Heart right ventricle (tissue), 16 donors: ENCODE measurements at regions of chr10 and their contacts with region 1.

Region 1: DNA sequence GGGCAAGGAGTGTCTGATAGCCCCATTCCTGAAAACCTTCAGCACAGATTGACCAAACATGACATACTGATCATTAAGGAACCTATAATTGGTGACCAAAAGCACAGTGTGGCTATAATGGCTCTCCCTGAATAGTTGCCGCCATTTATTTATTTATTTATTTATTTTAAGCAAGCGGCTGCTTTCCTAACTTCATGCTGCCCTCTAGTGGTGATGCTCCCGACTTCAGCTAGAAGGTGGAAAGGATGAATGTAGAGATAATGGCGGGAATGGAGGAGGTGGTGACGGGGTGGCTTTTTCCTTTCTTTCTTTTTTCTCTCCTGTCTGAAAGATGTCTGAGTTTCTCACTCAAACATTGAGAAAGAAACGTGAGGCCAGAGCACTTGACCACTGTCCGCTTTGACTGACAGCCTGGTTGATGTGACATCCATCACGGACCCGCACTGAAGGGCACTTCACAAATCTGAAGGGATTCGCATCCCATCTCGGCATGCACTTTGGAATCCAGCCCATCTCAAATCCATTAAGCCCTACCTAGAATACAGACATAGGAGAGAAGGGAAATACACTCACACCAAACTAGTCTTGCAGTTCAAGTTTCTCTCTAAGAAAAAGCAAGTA is 1090.1 kb downstream of the KCNMA1 start:
- DNase-seq: peak; percentile 56 to 89
- ATAC-seq: peak; percentile 56 to 78 (median 72)
- H3K4me3 ChIP-seq: peak overlapping the region in 1 of 10 donors; percentile 12
- H3K27ac ChIP-seq: no peak overlapping the region
- H3K4me1 ChIP-seq: peaks cover 0 to 15% (median 0%) of the 10 kb centered on the region in 9 donors
- H3K27me3 ChIP-seq: no peaks in the 10 kb centered on the region
- CTCF ChIP-seq: peak; percentile 72 to 91 (median 83)

Region 2: DNA sequence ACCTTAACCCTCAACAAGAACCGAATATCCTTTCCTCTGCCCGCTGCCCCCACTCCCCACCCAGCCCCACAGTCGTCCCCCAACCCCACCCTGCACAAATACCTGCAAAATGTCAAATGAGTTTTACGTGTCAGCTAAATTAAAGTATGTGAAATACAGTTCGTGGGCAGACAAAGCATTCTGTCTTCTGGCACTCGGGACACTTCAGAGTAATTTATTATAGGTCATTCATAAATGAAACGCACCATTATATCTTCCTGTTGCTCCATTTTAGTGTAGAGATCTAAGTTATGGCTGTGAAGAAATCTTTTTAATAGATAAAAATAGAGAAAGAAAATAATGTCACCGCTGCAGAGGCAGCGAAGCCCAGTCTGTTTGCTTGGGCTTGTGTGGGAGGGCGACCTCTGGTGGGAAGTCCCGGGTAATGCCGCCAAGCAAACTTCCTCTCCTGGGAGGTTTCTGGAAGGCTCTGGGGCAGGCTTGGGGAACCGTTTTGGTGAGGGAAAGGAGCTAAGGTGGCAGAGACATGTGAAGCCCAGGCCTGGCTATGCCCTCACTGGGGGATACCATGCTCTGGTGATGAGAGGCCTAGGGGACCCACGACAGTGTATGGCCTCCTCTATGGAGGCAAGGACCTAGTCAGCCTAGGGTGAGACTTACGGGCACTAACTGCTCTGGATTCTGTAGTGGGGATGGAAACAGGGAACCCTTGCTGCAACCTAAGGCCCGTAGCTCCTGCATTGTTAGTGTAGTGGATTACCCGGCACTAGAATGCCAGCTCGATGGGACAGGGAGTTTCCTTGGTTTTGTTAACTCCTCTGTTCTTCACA is 511.1 kb before region 1 on chr10:
- intact Hi-C with region 1: loop called in 7 of 10 experiments (anchors 5 to 10 kb)
- DNase-seq: peak; percentile 73 to 81
- ATAC-seq: peak; percentile 78 to 95 (median 88)
- H3K4me3 ChIP-seq: peak overlapping the region in 6 of 10 donors; percentile 19 to 38 (median 25)
- H3K27ac ChIP-seq: no peak overlapping the region
- H3K4me1 ChIP-seq: peaks cover 0 to 25% (median 9%) of the 10 kb centered on the region in 9 donors
- H3K27me3 ChIP-seq: no peaks in the 10 kb centered on the region
- CTCF ChIP-seq: peak; percentile 88 to 98 (median 95)

Region 3: GRCh38 chr10:76139431-76139830 is 408.0 kb before region 1 on chr10:
- intact Hi-C with region 1: no loop called
- DNase-seq: no peak
- ATAC-seq: no peak
- H3K4me3 ChIP-seq: no peak overlapping the region
- H3K27ac ChIP-seq: no peak overlapping the region
- H3K4me1 ChIP-seq: peaks cover 0 to 14% (median 0%) of the 10 kb centered on the region in 9 donors
- H3K27me3 ChIP-seq: no peaks in the 10 kb centered on the region
- CTCF ChIP-seq: no peak

Region 4: DNA sequence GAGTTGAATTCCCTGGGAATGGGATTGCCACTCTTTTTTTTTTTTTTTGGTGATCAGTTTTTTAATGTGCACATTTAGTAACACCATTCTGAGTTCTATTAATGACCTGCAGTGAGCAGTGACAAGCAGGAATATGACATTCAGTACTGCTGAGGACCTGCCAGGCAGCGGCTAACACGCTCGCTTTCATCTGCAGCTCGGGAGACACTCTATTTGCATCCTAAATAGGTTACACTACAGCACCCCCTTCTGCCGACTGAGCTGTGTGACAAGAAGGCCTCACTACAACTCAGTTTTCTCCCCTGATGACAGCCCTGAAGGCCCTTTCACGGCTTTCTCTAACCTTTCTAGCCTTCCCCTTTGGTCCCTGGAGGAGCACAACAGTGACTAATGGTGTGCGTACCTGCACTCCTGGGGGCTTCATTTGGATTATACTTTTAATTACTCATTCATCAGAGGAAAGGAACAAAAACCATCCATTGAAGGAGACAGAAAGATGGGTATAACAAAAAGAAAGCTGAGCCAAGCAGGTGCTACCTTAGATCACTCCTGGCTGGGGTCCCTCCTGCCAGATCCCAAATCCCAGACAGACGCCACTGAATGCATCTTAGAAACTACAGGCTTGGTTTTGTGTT is 243.7 kb before region 1 on chr10:
- intact Hi-C with region 1: loop called in 4 of 10 experiments (anchors 10 kb)
- DNase-seq: peak; percentile 59 to 78
- ATAC-seq: peak; percentile 90 to 97 (median 94)
- H3K4me3 ChIP-seq: no peak overlapping the region
- H3K27ac ChIP-seq: no peak overlapping the region
- H3K4me1 ChIP-seq: peaks cover 0 to 34% (median 15%) of the 10 kb centered on the region in 9 donors
- H3K27me3 ChIP-seq: no peaks in the 10 kb centered on the region
- CTCF ChIP-seq: peak; percentile 20 to 72 (median 58)

Region 5: GRCh38 chr10:76324283-76324682 is 223.2 kb before region 1 on chr10:
- intact Hi-C with region 1: loop called in 1 of 10 experiments (anchors 10 kb)
- DNase-seq: peak in 1 of 2 donors; percentile 44
- ATAC-seq: peak in 7 of 8 donors; percentile 47 to 94 (median 79)
- H3K4me3 ChIP-seq: no peak overlapping the region
- H3K27ac ChIP-seq: no peak overlapping the region
- H3K4me1 ChIP-seq: peaks cover 0 to 9% (median 0%) of the 10 kb centered on the region in 9 donors
- H3K27me3 ChIP-seq: no peaks in the 10 kb centered on the region
- CTCF ChIP-seq: no peak

Region 6: DNA sequence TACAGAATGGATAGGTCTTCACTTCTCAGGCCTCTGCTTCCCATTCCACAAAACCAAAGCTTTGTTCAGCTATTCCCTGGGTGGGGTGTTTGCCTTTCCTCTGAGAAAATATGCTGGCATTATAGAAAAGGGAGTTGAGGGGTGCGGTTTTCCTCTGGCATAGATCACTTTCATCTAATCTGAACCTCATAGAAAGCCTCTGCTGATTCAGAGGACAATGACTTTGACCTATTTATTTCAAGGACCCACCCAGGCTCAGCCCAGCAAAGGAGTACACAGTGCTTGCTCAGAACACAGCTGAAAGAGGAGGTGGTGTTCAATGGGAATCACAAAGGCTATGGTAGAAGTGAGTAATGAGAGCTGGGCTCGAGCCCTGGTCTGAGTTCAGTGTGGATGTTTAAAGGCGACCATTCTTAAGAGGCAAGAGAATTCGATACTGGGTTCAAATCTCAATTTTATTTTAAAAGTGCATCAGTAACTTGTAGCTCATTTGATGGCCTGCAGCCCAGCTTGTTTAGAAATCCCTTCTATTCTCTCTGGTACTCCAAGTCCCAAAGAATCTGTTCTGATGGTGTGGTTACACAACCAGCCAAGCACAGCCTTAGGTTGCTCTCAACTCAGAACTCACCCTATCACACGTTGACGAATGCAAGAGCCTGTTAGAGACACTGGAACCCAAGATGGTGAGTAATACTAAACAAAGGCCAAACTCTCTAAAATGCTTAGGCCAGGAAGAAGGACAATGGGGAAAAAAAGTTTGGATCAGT is 103.2 kb before region 1 on chr10:
- intact Hi-C with region 1: loop called in 1 of 10 experiments (anchors 5 kb)
- DNase-seq: no peak
- ATAC-seq: peak in 7 of 8 donors; percentile 56 to 94 (median 79)
- H3K4me3 ChIP-seq: no peak overlapping the region
- H3K27ac ChIP-seq: peak overlapping the region in 6 of 10 donors; percentile 12 to 73 (median 33)
- H3K4me1 ChIP-seq: peaks cover 0 to 27% (median 20%) of the 10 kb centered on the region in 9 donors
- H3K27me3 ChIP-seq: no peaks in the 10 kb centered on the region
- CTCF ChIP-seq: no peak

Region 7: GRCh38 chr10:77111611-77112550 is 564.4 kb after region 1 on chr10:
- intact Hi-C with region 1: loop called in 1 of 10 experiments (anchors 10 kb)
- DNase-seq: no peak
- ATAC-seq: peak in 6 of 8 donors; percentile 55 to 74 (median 70)
- H3K4me3 ChIP-seq: no peak overlapping the region
- H3K27ac ChIP-seq: no peak overlapping the region
- H3K4me1 ChIP-seq: peaks cover 0 to 12% (median 0%) of the 10 kb centered on the region in 9 donors
- H3K27me3 ChIP-seq: peaks cover 0 to 23% (median 0%) of the 10 kb centered on the region in 7 donors
- CTCF ChIP-seq: peak; percentile 65 to 86 (median 81)

Region 8: DNA sequence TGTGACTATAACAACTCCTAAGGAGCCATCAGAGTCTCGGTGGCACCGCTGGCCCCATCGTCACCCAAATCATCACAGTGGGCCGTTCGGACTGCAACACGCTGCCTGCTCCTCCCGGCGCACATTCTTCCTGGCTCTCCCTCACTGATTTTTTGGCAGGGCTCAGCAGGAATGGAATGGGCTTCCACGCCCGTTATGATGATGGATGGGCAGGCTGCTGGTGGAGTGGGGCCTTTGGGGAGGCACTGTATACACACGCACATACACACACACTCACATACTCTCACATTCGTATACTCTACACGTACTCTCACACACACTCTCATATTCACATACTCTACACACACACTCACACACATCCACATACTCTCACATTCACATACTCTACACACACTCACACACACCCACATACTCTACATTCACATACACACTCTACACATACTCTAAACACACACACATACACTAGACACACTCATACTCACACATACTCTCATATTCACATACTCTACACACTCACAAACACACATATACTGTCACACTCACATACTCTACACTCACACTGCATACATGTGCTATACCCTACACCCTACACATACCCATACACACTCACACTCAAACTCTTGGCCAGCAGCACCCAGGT is 990.4 kb after region 1 on chr10:
- intact Hi-C with region 1: no loop called
- DNase-seq: no peak
- ATAC-seq: no peak
- H3K4me3 ChIP-seq: no peak overlapping the region
- H3K27ac ChIP-seq: no peak overlapping the region
- H3K4me1 ChIP-seq: peaks cover 0 to 15% (median 0%) of the 10 kb centered on the region in 9 donors
- H3K27me3 ChIP-seq: peaks cover 0 to 5% (median 0%) of the 10 kb centered on the region in 7 donors
- CTCF ChIP-seq: no peak